ENCODE measurements at regions of chr15 and their contacts with region 1.

Region 1: GRCh38 chr15:42018306-42019224 is 2.3 kb downstream of the PLA2G4E start:
- DNase-seq: peak; percentile 9 to 69
- ATAC-seq: peak; percentile 55 to 95 (median 84)
- H3K4me3 ChIP-seq: no peak overlapping the region
- H3K27ac ChIP-seq: peak overlapping the region in 5 of 10 donors; percentile 34 to 71 (median 57)
- H3K4me1 ChIP-seq: peaks cover 3 to 17% (median 11%) of the 10 kb centered on the region in 9 donors
- H3K27me3 ChIP-seq: no peaks in the 10 kb centered on the region
- CTCF ChIP-seq: no peak

Region 2: GRCh38 chr15:41634072-41634626 is 384.4 kb before region 1 on chr15:
- intact Hi-C with region 1: no loop called
- DNase-seq: no peak
- ATAC-seq: no peak
- H3K4me3 ChIP-seq: no peak overlapping the region
- H3K27ac ChIP-seq: no peak overlapping the region
- H3K4me1 ChIP-seq: peaks cover 0 to 29% (median 7%) of the 10 kb centered on the region in 9 donors
- H3K27me3 ChIP-seq: no peaks in the 10 kb centered on the region
- CTCF ChIP-seq: no peak

Region 3: DNA sequence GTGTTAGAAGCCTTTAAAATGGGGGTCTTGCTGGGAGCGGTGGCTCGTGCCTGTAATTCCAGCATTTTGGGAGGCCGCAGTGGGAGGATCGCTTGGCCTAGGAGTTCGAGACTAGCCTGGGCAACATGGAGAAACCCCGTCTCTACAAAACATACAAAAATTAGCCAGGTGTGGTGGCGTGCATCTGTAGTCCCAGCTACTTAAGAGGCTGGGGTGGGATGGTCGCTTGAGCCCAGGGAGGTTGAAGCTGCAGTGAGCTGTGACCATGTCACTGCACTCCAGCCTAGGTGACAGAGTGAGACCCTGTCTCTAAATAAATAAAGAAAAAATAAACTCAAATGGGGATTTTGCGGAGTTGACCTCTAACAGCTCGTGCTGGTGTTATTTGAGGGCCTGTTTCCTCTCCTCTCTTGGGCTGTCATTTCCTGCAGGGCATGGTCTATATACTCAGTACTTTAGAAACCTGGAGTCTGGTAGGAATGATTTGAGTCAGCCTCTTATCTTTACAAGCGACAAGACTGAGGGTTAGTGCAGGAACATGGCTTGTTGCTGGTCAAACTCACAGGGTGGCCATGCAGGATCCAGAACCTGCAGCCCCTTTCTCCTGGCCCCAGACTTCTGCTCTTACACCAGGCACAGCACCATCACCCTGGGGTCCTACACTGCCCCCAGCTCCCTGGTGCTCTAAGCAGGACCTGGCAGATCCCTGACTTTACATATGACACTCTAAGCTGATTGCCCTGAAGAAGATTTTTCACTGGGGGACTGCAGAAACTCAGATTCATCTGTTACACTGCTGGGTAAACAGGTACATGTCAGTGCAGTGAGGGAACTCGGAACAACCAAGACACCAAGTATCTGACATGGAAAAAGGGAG is 61.3 kb before region 1 on chr15:
- intact Hi-C with region 1: no loop called
- DNase-seq: no peak
- ATAC-seq: peak; percentile 25 to 69 (median 44)
- H3K4me3 ChIP-seq: no peak overlapping the region
- H3K27ac ChIP-seq: peak overlapping the region; percentile 51 to 88 (median 76)
- H3K4me1 ChIP-seq: peaks cover 22 to 97% (median 58%) of the 10 kb centered on the region in 9 donors
- H3K27me3 ChIP-seq: no peaks in the 10 kb centered on the region
- CTCF ChIP-seq: no peak

Region 4: GRCh38 chr15:42050484-42051255 is 32.1 kb after region 1 on chr15:
- intact Hi-C with region 1: loop called in 1 of 10 experiments (anchors 5 kb)
- DNase-seq: no peak
- ATAC-seq: peak; percentile 55 to 89 (median 77)
- H3K4me3 ChIP-seq: no peak overlapping the region
- H3K27ac ChIP-seq: peak overlapping the region in 9 of 10 donors; percentile 36 to 75 (median 69)
- H3K4me1 ChIP-seq: peaks cover 0 to 24% (median 6%) of the 10 kb centered on the region in 9 donors
- H3K27me3 ChIP-seq: peaks cover 0 to 4% (median 0%) of the 10 kb centered on the region in 7 donors
- CTCF ChIP-seq: no peak